ENCODE measurements at regions of chr15 and their contacts with region 1.

Region 1: GRCh38 chr15:73273181-73274002 is 95.4 kb downstream of the HCN4 start:
- DNase-seq: peak in 1 of 2 donors; percentile 71
- H3K4me3 ChIP-seq: no peak overlapping the region
- H3K27ac ChIP-seq: no peak overlapping the region
- H3K4me1 ChIP-seq: peaks cover 0 to 3% of the 10 kb centered on the region in 2 donors
- H3K27me3 ChIP-seq: no peaks in the 10 kb centered on the region
- CTCF ChIP-seq: peak; percentile 45 to 80 (median 72)

Region 2: GRCh38 chr15:72722071-72722696 is 551.2 kb before region 1 on chr15:
- intact Hi-C with region 1: loop called (anchors 5 kb)
- DNase-seq: peak in 1 of 2 donors; percentile 71
- H3K4me3 ChIP-seq: no peak overlapping the region
- H3K27ac ChIP-seq: no peak overlapping the region
- H3K4me1 ChIP-seq: no peaks in the 10 kb centered on the region
- H3K27me3 ChIP-seq: no peaks in the 10 kb centered on the region
- CTCF ChIP-seq: peak; percentile 30 to 65 (median 45)

Region 3: GRCh38 chr15:73240866-73241499 is 32.4 kb before region 1 on chr15:
- intact Hi-C with region 1: loop called (anchors 1 kb)
- DNase-seq: peak in 1 of 2 donors; percentile 86
- H3K4me3 ChIP-seq: no peak overlapping the region
- H3K27ac ChIP-seq: no peak overlapping the region
- H3K4me1 ChIP-seq: peaks cover 0 to 7% of the 10 kb centered on the region in 2 donors
- H3K27me3 ChIP-seq: no peaks in the 10 kb centered on the region
- CTCF ChIP-seq: peak; percentile 68 to 90 (median 85)

Measured in ascending aorta (tissue), 2 donors.